ENCODE measurements at regions of chr17 and their contacts with region 1.

Region 1: DNA sequence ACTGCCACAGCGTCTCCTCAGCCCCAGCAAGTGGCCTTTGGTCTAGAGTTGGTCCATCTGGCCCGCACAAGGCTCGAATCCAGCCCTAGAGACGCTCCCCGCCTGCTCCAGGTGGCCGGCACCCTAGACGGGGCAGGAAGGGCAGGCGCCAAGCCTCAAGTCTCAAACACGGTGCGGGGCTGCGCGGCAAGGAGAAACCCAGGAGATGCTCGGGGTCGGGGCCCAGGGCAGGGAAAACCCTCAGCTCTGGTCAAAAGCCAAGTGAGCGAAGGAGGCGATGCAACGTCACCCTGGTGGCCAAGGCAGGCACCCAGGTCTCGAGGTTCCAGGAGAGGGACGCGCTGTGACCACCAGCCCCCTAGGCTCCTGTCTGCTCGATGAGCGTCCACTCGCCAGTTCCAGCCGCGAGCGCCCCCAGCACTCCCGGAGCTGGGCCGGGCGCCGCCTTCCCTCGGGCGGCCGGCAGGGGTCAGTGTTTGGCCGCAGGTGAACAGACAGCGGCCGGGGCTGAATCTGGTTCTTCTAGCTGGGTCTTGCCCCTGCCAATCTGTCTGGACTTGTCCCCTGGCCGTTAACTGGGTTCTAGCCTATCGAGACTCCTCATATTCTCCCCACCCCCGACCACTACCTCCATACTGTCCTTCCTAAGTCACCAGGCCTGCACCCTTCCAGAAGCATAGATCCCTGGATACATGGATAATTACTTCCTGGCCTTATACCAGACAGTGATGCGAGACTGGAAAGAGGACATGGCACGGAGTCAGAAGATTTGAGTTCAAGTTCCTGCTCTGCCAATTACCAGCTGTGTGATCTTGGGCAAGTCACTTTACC is 44.0 kb downstream of the PRAC1 start:
- DNase-seq: peak; percentile 83
- H3K4me3 ChIP-seq: no peak overlapping the region
- H3K27ac ChIP-seq: no peak overlapping the region
- H3K4me1 ChIP-seq: peaks cover 3% of the 10 kb centered on the region
- H3K27me3 ChIP-seq: no peaks in the 10 kb centered on the region
- CTCF ChIP-seq: peak; percentile 96

Region 2: GRCh38 chr17:48483471-48484131 is 194.8 kb before region 1 on chr17:
- intact Hi-C with region 1: no loop called
- DNase-seq: no peak
- H3K4me3 ChIP-seq: no peak overlapping the region
- H3K27ac ChIP-seq: no peak overlapping the region
- H3K4me1 ChIP-seq: peaks cover 3% of the 10 kb centered on the region
- H3K27me3 ChIP-seq: no peaks in the 10 kb centered on the region
- CTCF ChIP-seq: no peak

Region 3: DNA sequence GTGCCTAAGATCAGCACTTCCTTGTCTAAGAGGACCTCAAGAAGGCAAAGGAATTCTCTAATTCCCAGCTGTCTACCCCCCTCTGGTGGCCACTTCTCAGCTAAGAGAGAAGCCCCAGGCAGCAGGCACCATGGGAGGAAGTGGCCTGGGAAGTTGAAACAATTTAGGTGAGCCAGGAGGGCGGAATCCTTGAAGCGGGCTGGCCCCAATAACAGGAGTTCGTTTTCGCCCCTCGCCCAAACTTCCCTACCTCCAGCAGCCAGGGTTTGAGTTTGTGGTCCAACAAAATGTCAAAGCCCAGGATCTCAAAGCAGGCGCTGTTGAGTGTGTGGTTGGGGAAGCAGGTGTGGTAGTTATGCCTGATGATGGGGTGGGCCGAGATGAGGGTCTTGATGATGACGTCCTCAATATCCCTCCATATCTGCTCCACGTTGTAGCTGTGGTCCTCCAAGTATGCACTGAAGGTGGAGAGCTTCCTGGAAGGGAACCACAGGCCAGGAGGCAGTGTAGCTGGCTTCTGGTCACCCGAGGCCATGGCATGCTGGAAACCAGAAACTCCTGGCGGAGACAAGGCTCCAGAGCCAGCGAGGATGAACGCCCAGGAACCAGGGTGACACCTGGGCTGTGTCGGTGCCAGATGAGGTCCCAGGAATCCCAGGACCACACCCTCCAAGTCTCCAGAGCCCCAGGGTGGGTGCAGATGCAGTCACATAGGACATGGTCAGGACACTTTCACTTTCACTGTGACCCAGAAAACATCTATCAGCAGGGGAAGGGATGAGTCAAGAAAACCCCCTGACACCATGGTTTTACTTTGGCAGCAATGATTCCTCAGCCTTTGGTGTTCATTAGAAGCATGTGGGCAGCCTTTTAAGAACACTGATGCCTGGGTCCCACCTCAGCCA is 113.0 kb after region 1 on chr17:
- intact Hi-C with region 1: loop called (anchors 2 kb)
- DNase-seq: peak; percentile 95
- H3K4me3 ChIP-seq: no peak overlapping the region
- H3K27ac ChIP-seq: peak overlapping the region; percentile 71
- H3K4me1 ChIP-seq: no peaks in the 10 kb centered on the region
- H3K27me3 ChIP-seq: no peaks in the 10 kb centered on the region
- CTCF ChIP-seq: peak; percentile 65

Region 4: DNA sequence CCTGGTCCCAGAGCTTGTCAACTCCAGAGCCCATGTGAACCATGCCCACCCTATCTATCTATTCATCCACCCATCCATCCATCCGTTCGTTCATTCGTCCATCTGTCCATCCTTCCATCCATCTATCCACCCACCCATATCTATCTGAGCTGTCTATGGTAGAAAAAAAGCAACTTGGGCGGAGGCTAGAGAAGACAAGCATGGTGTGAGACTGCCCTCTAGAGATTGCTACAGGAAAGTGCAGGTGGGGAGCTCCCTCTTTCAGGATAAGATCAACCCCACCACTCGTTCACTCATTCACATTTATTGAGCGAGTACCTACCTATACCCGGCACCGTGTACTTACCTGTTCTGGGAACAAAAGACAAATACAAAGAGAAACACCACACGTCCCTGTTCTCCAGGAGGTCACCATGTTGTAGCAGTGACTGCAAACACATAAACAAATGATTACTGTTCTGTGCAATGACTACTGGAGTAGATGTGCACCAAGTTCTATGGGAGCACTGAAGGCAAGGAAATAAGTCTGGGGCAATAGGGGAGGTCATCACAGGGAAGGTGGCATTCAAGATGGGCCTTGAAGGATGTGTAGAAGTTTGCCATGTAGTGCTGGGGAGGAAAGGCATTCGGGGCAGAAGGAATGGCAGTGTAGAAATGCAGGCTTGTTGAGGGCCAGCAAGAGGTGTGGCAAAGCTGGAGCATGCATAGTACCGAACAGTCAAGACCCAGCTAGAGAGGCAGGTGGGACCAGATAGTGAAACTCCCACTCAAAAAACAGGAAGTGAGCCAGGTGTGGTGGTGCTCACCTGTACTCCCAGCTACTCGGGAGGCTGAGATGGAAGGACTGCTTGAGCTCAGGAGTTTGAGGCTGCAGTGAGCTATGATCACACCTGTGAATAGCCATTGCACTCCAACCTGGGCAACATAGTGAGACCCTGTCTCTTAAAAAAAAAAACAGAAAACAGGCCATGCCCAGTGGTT is 200.9 kb after region 1 on chr17:
- intact Hi-C with region 1: loop called (anchors 2 kb)
- DNase-seq: peak; percentile 73
- H3K4me3 ChIP-seq: no peak overlapping the region
- H3K27ac ChIP-seq: no peak overlapping the region
- H3K4me1 ChIP-seq: no peaks in the 10 kb centered on the region
- H3K27me3 ChIP-seq: no peaks in the 10 kb centered on the region
- CTCF ChIP-seq: peak; percentile 92

Region 5: DNA sequence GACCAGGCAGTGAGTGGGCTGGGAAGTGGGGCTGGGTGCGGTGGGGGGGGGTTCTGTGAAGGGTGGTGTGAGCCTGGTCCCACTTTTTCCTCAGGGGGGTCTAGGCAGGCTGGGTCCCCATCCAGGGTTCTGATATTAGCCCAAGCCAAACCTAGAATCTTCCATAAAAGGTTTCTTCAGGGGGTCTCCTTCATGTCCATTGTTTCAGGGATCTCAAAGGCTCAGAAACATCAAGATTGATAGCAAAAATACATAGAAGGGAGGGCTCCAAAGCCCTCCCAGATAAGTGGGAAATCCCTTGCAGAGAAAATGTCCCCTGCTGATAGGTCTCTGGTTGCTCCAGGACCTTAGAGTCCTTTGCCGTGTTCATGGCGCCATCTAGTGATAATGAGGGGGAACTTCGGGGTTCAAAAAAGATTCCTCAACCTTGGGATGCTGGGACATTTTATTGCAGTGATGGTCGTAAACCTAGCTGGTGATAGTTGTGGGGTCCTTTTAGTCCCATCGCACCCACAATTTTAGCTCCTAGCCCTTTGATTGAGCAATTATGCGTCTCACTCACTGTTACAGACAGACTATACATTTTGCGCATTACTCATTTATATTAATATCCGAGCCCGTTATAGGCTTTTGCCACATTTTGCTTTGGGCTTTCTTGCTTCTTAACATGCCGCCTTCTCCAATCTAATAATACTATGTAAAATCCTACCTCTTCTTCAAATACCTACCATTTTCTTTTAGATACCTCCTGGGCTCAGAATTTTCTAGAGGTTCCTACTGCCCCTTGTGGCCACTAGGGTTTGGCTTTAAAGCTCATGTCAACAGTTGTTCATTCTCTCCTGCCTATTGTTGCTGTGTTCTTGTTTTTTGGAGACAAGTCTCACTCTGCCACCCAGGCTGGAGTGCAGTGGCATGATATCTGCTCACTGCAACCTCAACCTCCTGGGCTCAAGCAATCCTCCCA is 353.9 kb after region 1 on chr17:
- intact Hi-C with region 1: loop called (anchors 10 kb)
- DNase-seq: peak; percentile 62
- H3K4me3 ChIP-seq: no peak overlapping the region
- H3K27ac ChIP-seq: no peak overlapping the region
- H3K4me1 ChIP-seq: no peaks in the 10 kb centered on the region
- H3K27me3 ChIP-seq: no peaks in the 10 kb centered on the region
- CTCF ChIP-seq: peak; percentile 72

Measured in colonic mucosa (tissue), 4 donors.